ENCODE measurements at regions of chr3 and their contacts with region 1.

Region 1: GRCh38 chr3:36868614-36869436 is 76.0 kb downstream of the TRANK1 start:
- DNase-seq: peak; percentile 62
- ATAC-seq: peak; percentile 87
- H3K4me3 Mint-ChIP-seq: no peak overlapping the region
- H3K27ac Mint-ChIP-seq: no peak overlapping the region
- H3K4me1 Mint-ChIP-seq: peaks cover 12% of the 10 kb centered on the region
- H3K27me3 Mint-ChIP-seq: no peaks in the 10 kb centered on the region

Region 2: DNA sequence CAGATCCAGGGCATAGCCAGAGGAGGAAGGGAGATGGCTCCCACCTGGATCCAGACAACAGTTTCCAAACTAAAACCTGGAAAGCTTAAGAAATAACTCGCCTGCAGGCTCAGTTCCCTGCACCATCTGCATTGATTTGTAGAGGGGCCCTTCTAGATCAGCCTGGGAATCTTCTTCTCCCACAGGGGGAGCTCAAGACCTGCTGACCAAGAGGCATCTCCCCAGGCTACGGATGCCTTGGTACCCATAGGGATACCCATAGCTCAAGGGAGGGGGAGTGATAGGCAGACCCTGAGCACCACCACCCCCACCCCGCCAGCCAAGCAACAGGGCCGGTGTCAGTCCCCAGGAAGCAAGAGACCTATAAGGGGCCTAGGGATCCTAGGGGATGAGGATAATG is 76.5 kb before region 1 on chr3:
- CTCF ChIA-PET with region 1: interaction called, 11 read pairs
- DNase-seq: no peak
- ATAC-seq: peak; percentile 60
- H3K4me3 Mint-ChIP-seq: no peak overlapping the region
- H3K27ac Mint-ChIP-seq: no peak overlapping the region
- H3K4me1 Mint-ChIP-seq: no peaks in the 10 kb centered on the region
- H3K27me3 Mint-ChIP-seq: peaks cover 16% of the 10 kb centered on the region

Region 3: GRCh38 chr3:36843065-36844051 is 25.5 kb before region 1 on chr3:
- CTCF ChIA-PET with region 1: interaction called, 13 read pairs
- DNase-seq: peak; percentile 81
- ATAC-seq: peak; percentile 89
- H3K4me3 Mint-ChIP-seq: no peak overlapping the region
- H3K27ac Mint-ChIP-seq: peak overlapping the region; percentile 65
- H3K4me1 Mint-ChIP-seq: peaks cover 36% of the 10 kb centered on the region
- H3K27me3 Mint-ChIP-seq: no peaks in the 10 kb centered on the region

Measured in activated CD8-positive, alpha-beta memory T cell treated with anti-CD3 and anti-CD28 coated beads, Interleukin-2, amount 10 ng/mL, durations not matched to agents 7 days and 5 days (primary cell).